ENCODE measurements at regions of chr15 and their contacts with region 1.

Region 1: GRCh38 chr15:78909791-78910228 is 35.0 kb downstream of the CTSH start:
- DNase-seq: peak; percentile 67
- CTCF ChIP-seq: peak; percentile 48

Region 2: DNA sequence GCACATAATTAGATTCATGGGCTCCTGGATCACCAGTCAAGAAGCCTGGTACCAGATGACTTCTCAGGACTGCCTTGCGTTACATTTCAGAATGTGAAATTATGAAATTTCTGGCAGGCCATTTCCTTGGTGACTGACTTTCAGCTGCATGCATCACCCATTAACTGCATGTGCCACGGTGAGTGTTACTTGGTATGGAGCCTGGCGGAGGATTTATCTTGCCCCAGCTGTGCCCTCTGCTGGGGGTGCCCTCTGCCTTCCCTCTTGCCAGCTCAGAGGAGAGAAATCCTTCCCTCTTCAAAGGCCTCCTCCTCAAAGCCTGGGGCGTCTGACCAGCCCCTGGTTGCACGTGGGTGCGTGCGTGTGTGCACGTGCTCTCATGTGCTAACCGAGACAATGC is 92.8 kb after region 1 on chr15:
- in situ Hi-C with region 1: no loop called
- DNase-seq: no peak
- CTCF ChIP-seq: no peak

Region 3: DNA sequence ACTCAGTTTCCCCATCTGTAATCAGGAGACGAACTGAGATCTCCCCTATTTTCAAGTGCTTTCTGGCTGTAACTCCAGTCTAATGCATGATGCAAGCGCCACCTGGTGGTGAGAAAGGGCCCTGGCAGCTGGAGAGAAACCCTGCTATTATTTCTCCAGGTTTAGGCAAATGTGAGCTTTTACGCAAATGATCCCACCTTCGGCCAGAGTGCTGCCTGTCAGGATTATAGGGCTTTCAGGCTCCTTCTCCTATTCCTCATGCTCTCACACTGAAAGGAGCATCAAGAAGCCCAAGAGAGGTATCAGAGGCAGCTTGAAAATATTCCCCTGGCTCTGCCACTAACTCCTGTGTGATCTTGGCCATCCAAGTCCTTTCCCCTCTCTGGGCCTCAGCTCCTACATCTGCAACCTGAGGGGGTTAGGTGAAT is 274.7 kb after region 1 on chr15:
- in situ Hi-C with region 1: loop called (anchors 10 kb)
- DNase-seq: peak; percentile 79
- CTCF ChIP-seq: peak; percentile 94

Measured in GM13976 (cell line).